HepG2 (cell line): ENCODE measurements at regions of chr19 and their contacts with region 1.

Region 1: GRCh38 chr19:2016041-2016807 is 710 bp upstream of the BTBD2 start:
- DNase-seq: peak; percentile 63
- ATAC-seq: peak; percentile 55
- H3K4me3 ChIP-seq: peak overlapping the region in 2 of 3 experiments; percentile 26 to 59; a peak in 3 of 6 replicates
- H3K27ac ChIP-seq: no peak overlapping the region
- H3K4me1 ChIP-seq: peaks cover 23% of the 10 kb centered on the region
- H3K27me3 ChIP-seq: no peaks in the 10 kb centered on the region
- CTCF ChIP-seq: no peak
- EP300 ChIP-seq: no peak
- POLR2A ChIP-seq: no peak
- RAD21 ChIP-seq: no peak

Region 2: DNA sequence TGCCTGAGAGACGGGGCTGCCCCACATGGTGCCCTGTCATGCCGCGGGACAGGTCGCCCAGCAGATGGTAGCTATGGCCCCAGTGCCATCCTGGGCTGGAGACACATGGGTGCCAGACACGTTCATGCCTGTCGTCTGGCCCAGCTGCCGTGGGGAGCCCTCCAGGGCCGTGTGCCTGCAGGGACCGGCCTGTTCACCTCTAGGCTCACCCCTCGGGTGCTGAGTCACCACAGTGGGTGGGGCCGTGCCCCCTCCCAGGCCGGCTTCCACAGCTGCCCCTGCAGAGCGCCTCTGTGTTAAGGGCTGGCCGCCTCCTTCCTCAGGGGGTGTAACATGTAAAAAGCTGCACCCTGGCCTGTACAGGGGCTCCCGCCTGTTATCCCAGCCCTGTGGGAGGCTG is 39.1 kb before region 1 on chr19:
- CTCF ChIA-PET with region 1: no interaction called
- POLR2A ChIA-PET with region 1: no interaction called
- in situ Hi-C with region 1: no loop called
- intact Hi-C with region 1: no loop called
- DNase-seq: no peak
- ATAC-seq: no peak
- H3K4me3 ChIP-seq: no peak overlapping the region
- H3K27ac ChIP-seq: no peak overlapping the region
- H3K4me1 ChIP-seq: no peaks in the 10 kb centered on the region
- H3K27me3 ChIP-seq: no peaks in the 10 kb centered on the region
- CTCF ChIP-seq: no peak
- EP300 ChIP-seq: no peak
- POLR2A ChIP-seq: no peak
- RAD21 ChIP-seq: no peak

Region 3: GRCh38 chr19:1992759-1993260 is 23.4 kb before region 1 on chr19:
- CTCF ChIA-PET with region 1: no interaction called
- POLR2A ChIA-PET with region 1: no interaction called
- in situ Hi-C with region 1: no loop called
- intact Hi-C with region 1: no loop called
- DNase-seq: no peak
- ATAC-seq: no peak
- H3K4me3 ChIP-seq: no peak overlapping the region
- H3K27ac ChIP-seq: no peak overlapping the region
- H3K4me1 ChIP-seq: no peaks in the 10 kb centered on the region
- H3K27me3 ChIP-seq: no peaks in the 10 kb centered on the region
- CTCF ChIP-seq: no peak
- EP300 ChIP-seq: no peak
- POLR2A ChIP-seq: no peak
- RAD21 ChIP-seq: no peak

Region 4: GRCh38 chr19:2070436-2070827 is 54.2 kb after region 1 on chr19:
- CTCF ChIA-PET with region 1: interaction called, 25 read pairs
- POLR2A ChIA-PET with region 1: interaction called, 3 read pairs
- in situ Hi-C with region 1: no loop called
- intact Hi-C with region 1: loop called (anchors 1 kb)
- DNase-seq: no peak
- ATAC-seq: no peak
- H3K4me3 ChIP-seq: no peak overlapping the region
- H3K27ac ChIP-seq: no peak overlapping the region
- H3K4me1 ChIP-seq: peaks cover 38% of the 10 kb centered on the region
- H3K27me3 ChIP-seq: no peaks in the 10 kb centered on the region
- CTCF ChIP-seq: no peak
- EP300 ChIP-seq: no peak
- POLR2A ChIP-seq: no peak
- RAD21 ChIP-seq: no peak

Region 5: DNA sequence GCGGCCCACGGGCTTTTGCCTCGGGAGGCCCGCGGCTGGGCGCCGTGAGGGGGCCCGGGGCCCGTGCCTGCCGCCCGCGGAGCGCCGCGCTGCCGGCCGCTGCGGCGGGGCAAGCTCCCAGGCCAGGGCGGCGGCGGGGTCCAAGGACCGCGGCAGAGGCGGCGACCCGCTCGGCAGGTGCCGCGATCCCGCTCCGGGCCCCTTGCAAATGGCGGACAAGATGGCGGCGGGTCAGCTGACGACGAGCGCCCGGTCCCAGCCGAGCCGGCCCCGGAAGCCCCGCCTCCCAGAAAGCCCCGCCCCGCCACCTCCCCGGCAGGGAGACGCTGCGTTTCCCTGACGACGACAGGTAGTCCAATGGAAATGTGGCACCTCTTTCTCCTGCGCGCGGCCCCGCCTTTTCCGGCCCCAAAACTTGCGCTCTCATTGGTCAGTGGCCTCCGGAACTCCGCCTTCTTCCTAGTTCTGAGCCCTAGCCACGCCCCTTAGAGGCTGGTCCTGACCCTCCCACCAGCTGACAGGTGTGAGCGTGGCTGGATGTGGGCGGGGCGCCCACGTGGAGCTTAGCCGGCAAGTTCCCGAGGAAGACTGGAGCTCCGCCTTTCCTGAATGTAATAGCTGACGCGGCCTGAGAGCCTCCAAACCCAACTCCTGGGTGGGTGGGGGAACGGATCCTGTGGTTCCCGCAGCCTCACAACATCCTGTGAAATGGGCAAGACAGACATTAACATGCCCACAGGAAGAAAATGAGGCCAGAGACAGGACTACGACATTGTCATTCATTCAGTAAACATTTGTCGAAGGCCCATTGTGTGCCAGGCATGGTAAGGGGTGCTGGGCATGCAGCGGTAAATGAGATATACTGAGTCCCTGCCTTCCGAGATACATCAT is 135.4 kb after region 1 on chr19 and contains the start of gene AP3D1:
- CTCF ChIA-PET with region 1: no interaction called
- POLR2A ChIA-PET with region 1: interaction called, 3 read pairs
- in situ Hi-C with region 1: no loop called
- intact Hi-C with region 1: loop called (anchors 10 kb)
- DNase-seq: peak; percentile 98
- ATAC-seq: peak; percentile 86
- H3K4me3 ChIP-seq: peak within 1 kb of the TSS; percentile 85 to 100 (median 97)
- H3K27ac ChIP-seq: peak within 1 kb of the TSS; percentile 76
- H3K4me1 ChIP-seq: peaks cover 60% of the 10 kb centered on the region
- H3K27me3 ChIP-seq: no peaks in the 10 kb centered on the region; a peak in 1 of 5 replicates
- CTCF ChIP-seq: peak; percentile 12; the same call in 1 of the 2 replicates
- EP300 ChIP-seq: no peak; a peak in 1 of 4 replicates
- POLR2A ChIP-seq: peak; percentile 25 to 52; a peak in 1 of 4 replicates
- RAD21 ChIP-seq: no peak; the same call in none of the 2 replicates
- total RNA-seq, gene AP3D1: 73.5 and 82.6 TPM in 2 replicates

Region 6: GRCh38 chr19:2438178-2438864 is 422.1 kb after region 1 on chr19:
- CTCF ChIA-PET with region 1: no interaction called
- POLR2A ChIA-PET with region 1: no interaction called
- in situ Hi-C with region 1: no loop called
- intact Hi-C with region 1: no loop called
- DNase-seq: no peak
- ATAC-seq: no peak
- H3K4me3 ChIP-seq: no peak overlapping the region
- H3K27ac ChIP-seq: no peak overlapping the region
- H3K4me1 ChIP-seq: no peaks in the 10 kb centered on the region
- H3K27me3 ChIP-seq: no peaks in the 10 kb centered on the region
- CTCF ChIP-seq: no peak
- EP300 ChIP-seq: no peak
- POLR2A ChIP-seq: no peak
- RAD21 ChIP-seq: no peak